ENCODE measurements at regions of chr22 and their contacts with region 1.

Region 1: DNA sequence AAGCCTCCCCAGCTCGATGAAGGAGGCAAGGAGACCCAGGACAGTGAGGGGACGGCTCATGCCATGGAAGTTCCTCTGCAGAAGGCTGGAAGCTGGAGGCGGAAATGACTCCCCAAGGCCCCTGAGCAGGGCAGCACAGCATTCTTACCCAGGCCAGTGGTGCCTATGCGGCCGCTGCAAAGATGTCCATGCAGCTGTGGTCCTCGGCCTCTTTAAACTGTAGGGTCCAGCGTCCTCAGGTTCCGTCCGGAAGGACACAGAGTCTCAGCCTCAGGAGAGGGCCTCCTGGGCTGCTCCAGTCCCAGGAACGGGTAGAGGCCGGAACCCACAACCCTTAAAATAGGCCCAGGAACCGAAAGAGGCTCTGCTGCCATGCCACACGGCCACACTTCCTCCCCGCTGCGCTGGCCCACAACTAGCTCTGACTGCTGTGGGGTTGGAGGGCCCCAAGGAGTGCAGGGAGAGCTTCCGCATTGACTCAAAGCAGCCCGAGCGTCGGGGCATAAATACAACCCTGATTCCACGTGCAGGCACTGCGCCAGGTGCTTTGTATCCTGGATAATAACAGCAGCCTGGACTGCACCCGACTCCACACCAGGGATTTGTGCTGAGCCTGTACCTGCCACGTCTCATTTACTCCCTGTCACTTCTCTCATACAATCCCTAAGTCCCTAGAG is 5.5 kb downstream of the KIAA0930 start:
- DNase-seq: peak; percentile 40 to 78 (median 52)
- ATAC-seq: peak in 3 of 4 donors; percentile 30 to 69 (median 52)
- H3K4me3 ChIP-seq: peak overlapping the region in 1 of 12 donors; percentile 31
- H3K27ac ChIP-seq: peak overlapping the region in 1 of 12 donors; percentile 84
- H3K4me1 ChIP-seq: peaks cover 0 to 90% (median 9%) of the 10 kb centered on the region in 12 donors
- H3K27me3 ChIP-seq: no peaks in the 10 kb centered on the region
- CTCF ChIP-seq: no peak
- POLR2A ChIP-seq: no peak

Region 2: DNA sequence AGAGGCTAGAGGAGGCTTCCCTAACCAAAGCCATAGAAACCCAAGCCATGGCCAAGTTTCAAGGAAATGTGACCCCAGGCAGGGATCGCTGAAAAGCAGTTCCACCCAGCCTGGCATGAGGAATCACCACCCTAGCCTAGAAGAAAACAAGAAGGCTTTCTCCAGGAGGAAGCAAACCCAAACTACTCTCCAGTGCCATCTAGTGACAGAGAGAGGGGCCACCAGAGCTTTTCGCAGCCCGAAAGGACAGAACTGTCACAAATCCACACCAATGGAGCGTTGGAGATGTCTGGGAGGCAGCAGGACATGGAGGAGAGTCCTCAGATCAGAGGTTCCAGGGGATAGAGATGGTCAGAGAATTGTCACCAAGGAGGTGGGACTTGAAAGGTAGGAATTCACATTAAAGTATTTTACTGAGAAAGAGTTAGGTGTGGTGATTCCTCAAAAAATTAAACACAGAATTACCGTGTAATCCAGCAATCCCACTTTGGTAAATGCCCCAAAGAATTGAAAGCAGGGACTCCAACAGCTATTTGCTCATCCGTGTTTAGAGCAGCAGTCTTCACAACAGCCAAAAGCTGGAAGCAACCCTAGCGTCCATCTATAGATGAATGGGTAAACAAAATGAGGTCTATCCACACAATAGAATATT is 138.9 kb before region 1 on chr22:
- intact Hi-C with region 1: no loop called
- DNase-seq: peak in 3 of 5 donors; percentile 28 to 42 (median 36)
- ATAC-seq: peak in 3 of 4 donors; percentile 55 to 65 (median 59)
- H3K4me3 ChIP-seq: no peak overlapping the region
- H3K27ac ChIP-seq: no peak overlapping the region
- H3K4me1 ChIP-seq: no peaks in the 10 kb centered on the region
- H3K27me3 ChIP-seq: peaks cover 0 to 80% (median 18%) of the 10 kb centered on the region in 9 donors
- CTCF ChIP-seq: peak; percentile 55 to 80 (median 68)
- POLR2A ChIP-seq: no peak

Region 3: GRCh38 chr22:45185718-45186514 is 49.3 kb before region 1 on chr22:
- intact Hi-C with region 1: loop called in 1 of 10 experiments (anchors 10 kb)
- DNase-seq: no peak
- ATAC-seq: no peak
- H3K4me3 ChIP-seq: no peak overlapping the region
- H3K27ac ChIP-seq: no peak overlapping the region
- H3K4me1 ChIP-seq: peaks cover 0 to 3% (median 0%) of the 10 kb centered on the region in 12 donors
- H3K27me3 ChIP-seq: no peaks in the 10 kb centered on the region
- CTCF ChIP-seq: no peak
- POLR2A ChIP-seq: no peak

Region 4: DNA sequence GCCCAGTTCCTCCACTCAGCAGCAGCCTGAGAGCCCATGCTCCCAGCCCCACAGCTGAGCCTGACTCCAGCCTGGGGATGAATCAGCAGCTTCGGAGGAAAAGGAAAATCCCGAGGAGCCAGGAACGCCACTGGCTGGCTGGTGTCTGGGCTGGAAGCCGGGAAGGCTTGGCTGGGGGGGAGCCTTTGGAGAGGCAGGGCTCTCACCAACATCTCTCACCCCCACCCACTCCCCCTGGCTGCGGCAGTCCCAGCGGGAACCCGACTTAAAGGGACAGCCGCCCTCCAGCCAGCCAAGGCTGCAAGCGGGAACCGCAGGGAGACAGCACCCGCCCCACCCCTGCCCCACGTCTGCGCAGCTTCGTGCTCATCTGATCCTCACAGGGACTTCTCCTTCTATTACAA is 22.9 kb before region 1 on chr22:
- intact Hi-C with region 1: no loop called
- DNase-seq: peak; percentile 67 to 88 (median 81)
- ATAC-seq: peak; percentile 53 to 83 (median 74)
- H3K4me3 ChIP-seq: peak overlapping the region; percentile 8 to 59 (median 43)
- H3K27ac ChIP-seq: peak overlapping the region in 10 of 12 donors; percentile 11 to 85 (median 46)
- H3K4me1 ChIP-seq: peaks cover 0 to 42% (median 18%) of the 10 kb centered on the region in 12 donors
- H3K27me3 ChIP-seq: no peaks in the 10 kb centered on the region
- CTCF ChIP-seq: peak in 6 of 12 donors; percentile 9 to 43 (median 26)
- POLR2A ChIP-seq: no peak